ENCODE measurements at regions of chr15 and their contacts with region 1.

Region 1: DNA sequence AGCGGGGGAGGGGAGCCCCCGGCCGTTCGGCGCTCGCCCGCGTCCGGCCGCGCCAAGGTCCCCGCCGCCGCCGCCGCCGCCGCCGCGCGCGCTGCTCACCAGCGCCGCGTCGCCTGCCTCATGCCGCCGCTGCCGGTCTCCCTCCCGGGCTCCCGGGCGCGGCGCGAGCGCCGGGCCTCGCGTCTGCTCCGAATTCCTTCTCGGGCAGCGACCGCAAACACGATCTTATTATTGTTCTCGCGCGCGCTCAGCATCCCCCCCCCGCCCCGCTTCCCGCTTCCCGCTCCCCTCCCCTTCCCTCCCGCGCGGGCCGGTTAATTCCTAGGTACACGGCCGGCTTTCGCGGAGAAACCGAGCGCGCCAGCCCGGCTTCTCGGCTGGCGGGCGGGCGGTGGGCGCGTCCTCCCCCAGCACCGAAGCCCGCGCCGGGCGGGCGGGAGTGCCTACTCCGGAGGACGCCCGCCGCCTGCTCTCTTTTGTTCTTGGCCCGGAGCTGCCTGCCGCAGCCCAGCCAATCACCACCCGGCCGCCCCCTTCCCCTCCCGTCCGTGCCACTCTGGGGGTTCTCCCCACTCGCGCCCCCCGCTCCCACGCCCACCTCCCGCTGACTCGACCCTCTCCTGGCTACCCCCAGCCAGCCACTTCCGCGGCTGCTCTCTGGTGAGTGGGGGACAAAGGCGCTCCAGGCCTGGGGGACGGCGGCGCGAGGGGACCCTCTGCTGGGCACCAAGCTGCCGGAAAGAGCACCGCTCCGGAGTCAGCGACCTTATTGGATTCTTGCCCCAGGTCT is at the start of gene HDGFL3:
- DNase-seq: peak; percentile 57 to 81 (median 70)
- H3K4me3 ChIP-seq: peak within 1 kb of the TSS; percentile 79 to 92 (median 88)
- H3K27ac ChIP-seq: peak within 1 kb of the TSS in 1 of 2 experiments; percentile 72
- H3K4me1 ChIP-seq: peaks cover 9 to 19% (median 17%) of the 10 kb centered on the region in 4 experiments
- H3K27me3 ChIP-seq: no peaks in the 10 kb centered on the region

Region 2: DNA sequence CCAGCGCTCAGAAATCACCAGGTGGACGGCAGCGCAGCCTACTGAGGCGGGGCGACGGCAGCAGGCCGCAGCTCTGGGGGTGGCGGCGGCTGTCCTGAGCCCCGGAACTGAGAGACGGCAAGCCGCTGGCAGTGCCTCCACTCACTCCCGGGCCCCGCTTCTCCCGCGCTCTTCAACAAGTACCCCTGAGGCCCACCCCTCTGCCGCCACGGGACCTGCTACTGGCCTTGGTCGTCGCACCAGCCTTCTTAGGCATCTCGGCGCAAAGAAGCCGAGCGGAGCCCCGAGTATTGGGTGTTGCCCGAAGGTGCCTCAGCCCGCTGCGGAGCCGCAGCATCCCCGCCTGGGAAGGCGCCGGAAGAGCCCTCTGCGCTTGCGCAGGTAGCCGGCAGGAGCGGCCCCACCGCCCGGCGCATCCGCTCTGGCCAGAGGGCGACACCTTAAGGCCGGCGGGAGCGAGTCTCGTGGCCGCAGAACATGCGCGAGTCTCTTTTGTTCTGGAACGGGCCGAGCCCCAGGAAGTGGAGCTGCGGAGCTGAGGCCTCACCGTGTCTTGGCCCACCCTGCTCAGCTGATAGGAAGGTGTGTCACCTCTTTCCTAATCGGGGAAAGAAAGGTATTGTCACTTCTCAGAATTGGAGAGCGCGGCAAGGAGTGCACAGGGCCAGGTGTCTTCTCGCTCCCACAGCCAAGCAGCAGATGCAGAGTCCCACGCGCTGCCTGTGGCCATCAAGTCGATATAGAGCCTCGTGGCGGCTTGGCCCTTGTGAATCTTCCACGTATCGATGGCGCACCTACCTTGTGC is 196.3 kb before region 1 on chr15 and contains the start of gene C15orf40:
- CTCF ChIA-PET with region 1: interaction called, 10 read pairs
- POLR2A ChIA-PET with region 1: interaction called, 6 read pairs
- DNase-seq: peak; percentile 81 to 87 (median 83)
- H3K4me3 ChIP-seq: peak within 1 kb of the TSS; percentile 69 to 94 (median 90)
- H3K27ac ChIP-seq: peak within 1 kb of the TSS; percentile 61 to 77
- H3K4me1 ChIP-seq: peaks cover 18 to 37% (median 24%) of the 10 kb centered on the region in 4 experiments
- H3K27me3 ChIP-seq: no peaks in the 10 kb centered on the region

Region 3: DNA sequence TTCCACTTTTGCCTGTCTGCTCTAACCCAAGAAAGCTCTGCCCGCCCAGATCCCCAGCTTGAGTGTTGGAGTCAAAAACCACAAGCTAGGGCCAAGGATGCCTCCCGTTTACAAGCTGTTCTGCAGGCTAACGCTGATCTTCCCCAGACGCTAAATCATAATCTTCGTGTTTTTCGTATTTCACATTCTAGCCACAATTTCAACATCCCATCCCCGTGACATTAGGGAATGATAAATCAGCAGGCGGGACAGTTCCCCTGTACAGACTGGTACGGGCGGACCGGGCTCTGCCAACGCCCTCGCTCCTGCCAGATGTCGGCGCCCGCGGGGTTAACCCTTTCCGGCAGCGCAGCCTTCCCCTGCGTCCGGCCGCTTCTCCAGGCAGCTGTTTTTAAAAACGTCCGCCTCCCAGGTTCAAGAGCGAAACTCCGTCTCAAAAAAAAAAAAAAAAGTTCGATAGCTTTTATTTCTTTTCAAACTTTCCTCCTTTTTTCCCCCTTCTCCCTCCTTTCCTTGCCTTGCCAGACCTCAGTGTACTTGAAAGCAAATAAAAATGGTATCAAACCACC is 157.6 kb after region 1 on chr15:
- CTCF ChIA-PET with region 1: no interaction called
- POLR2A ChIA-PET with region 1: no interaction called
- DNase-seq: peak; percentile 39 to 73 (median 66)
- H3K4me3 ChIP-seq: peak overlapping the region in 6 of 7 experiments; percentile 20 to 71 (median 47)
- H3K27ac ChIP-seq: no peak overlapping the region
- H3K4me1 ChIP-seq: peaks cover 2 to 12% (median 7%) of the 10 kb centered on the region in 4 experiments
- H3K27me3 ChIP-seq: peaks cover 3 to 54% (median 28%) of the 10 kb centered on the region in 5 experiments